PC-9 (cell line): ENCODE measurements at regions of chr16 and their contacts with region 1.

Region 1: GRCh38 chr16:87484487-87485331 is 8.1 kb downstream of the ZCCHC14 start:
- DNase-seq: no peak
- H3K4me3 ChIP-seq: no peak overlapping the region
- H3K27ac ChIP-seq: no peak overlapping the region
- H3K4me1 ChIP-seq: peaks cover 13% of the 10 kb centered on the region
- H3K27me3 ChIP-seq: no peaks in the 10 kb centered on the region
- CTCF ChIP-seq: no peak

Region 2: GRCh38 chr16:87560428-87561199 is 75.9 kb after region 1 on chr16:
- CTCF ChIA-PET with region 1: interaction called, 12 read pairs
- POLR2A ChIA-PET with region 1: no interaction called
- intact Hi-C with region 1: no loop called
- DNase-seq: peak; percentile 39 to 56
- H3K4me3 ChIP-seq: no peak overlapping the region
- H3K27ac ChIP-seq: no peak overlapping the region
- H3K4me1 ChIP-seq: no peaks in the 10 kb centered on the region
- H3K27me3 ChIP-seq: peaks cover 51% of the 10 kb centered on the region
- CTCF ChIP-seq: no peak